CD8-positive, alpha-beta T cell (primary cell): ENCODE measurements at regions of chr11 and their contacts with region 1.

Region 1: GRCh38 chr11:64284048-64284961 is at the start of gene BAD:
- DNase-seq: peak; percentile 85 to 95 (median 92)
- ATAC-seq: peak; percentile 77
- H3K4me3 ChIP-seq: peak within 1 kb of the TSS; percentile 73 to 77
- H3K4me3 Mint-ChIP-seq: peak within 1 kb of the TSS; percentile 88
- H3K27ac ChIP-seq: peak within 1 kb of the TSS; percentile 95 to 100
- H3K27ac Mint-ChIP-seq: peak within 1 kb of the TSS; percentile 97
- H3K4me1 ChIP-seq: peaks cover 18% of the 10 kb centered on the region
- H3K4me1 Mint-ChIP-seq: peaks cover 16% of the 10 kb centered on the region
- H3K27me3 ChIP-seq: no peaks in the 10 kb centered on the region
- H3K27me3 Mint-ChIP-seq: no peaks in the 10 kb centered on the region
- CTCF ChIP-seq: no peak
- total RNA-seq, gene BAD: 14.6 to 18.2 TPM

Region 2: DNA sequence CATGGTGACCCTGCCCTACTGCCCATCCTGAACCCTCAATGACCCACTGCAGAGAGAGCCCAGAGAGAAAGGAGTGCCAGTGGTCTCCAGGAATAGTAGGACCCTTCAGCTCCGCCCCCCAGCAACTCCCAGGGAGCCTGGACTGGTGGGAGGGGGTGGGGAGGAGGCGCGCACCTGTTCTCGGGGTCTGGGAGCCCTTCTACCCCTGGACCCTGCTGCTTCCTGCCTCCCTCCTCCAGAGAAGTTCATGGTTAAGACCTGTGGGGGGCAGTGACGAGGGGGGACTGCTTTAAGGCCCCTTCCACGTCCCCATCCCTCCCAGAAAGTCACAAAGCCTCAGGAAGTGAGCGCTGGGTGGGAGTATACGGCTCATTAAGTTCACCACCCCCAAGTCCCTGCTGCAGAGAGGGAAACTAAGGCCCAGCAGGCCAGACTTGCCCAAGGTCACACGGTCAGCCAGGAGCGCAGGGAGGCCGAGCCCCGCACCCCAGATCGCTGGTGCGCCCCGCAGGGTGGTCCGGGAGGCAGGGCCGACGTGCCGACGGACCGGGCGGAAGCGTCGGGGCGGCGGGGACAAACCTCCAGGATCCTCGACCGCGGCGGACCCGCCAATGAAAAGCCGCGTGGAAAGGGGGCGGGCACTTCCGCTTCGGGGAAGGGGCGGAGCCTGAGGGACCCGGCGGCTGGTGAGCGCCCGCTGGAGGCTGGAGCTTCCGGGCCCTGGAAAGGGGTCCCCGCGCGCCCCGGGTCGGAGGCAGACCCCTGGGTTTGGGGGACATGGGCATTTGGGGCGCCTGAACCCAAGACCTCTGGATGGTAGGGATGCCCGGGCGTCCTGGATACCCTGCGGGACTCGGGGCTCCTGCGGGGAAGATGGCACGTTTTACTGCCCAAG is 58.4 kb before region 1 on chr11 and contains the starts of genes NUDT22 and TRPT1:
- CTCF ChIA-PET with region 1: no interaction called
- POLR2A ChIA-PET with region 1: interaction called, 5 read pairs
- intact Hi-C with region 1: loop called in 1 of 2 experiments (anchors 1 kb)
- DNase-seq: peak; percentile 75 to 96 (median 93)
- ATAC-seq: peak; percentile 65
- H3K4me3 ChIP-seq: peak within 1 kb of the TSS; percentile 76 to 100
- H3K4me3 Mint-ChIP-seq: peak within 1 kb of the TSS; percentile 93
- H3K27ac ChIP-seq: peak within 1 kb of the TSS; percentile 85 to 88
- H3K27ac Mint-ChIP-seq: peak within 1 kb of the TSS; percentile 91
- H3K4me1 ChIP-seq: peaks cover 41% of the 10 kb centered on the region
- H3K4me1 Mint-ChIP-seq: peaks cover 30% of the 10 kb centered on the region
- H3K27me3 ChIP-seq: no peaks in the 10 kb centered on the region
- H3K27me3 Mint-ChIP-seq: no peaks in the 10 kb centered on the region
- CTCF ChIP-seq: peak; percentile 58
- total RNA-seq, gene NUDT22: 20.1 to 23.6 TPM
- total RNA-seq, gene TRPT1: 12.3 to 14.3 TPM

Region 3: GRCh38 chr11:64240394-64241174 is 43.7 kb before region 1 on chr11 and contains the start of gene FKBP2:
- CTCF ChIA-PET with region 1: no interaction called
- POLR2A ChIA-PET with region 1: interaction called, 7 read pairs
- intact Hi-C with region 1: loop called (anchors 1 kb)
- DNase-seq: peak; percentile 94 to 100 (median 97)
- ATAC-seq: peak; percentile 63
- H3K4me3 ChIP-seq: peak within 1 kb of the TSS; percentile 80 to 97
- H3K4me3 Mint-ChIP-seq: peak within 1 kb of the TSS; percentile 90
- H3K27ac ChIP-seq: peak within 1 kb of the TSS; percentile 94 to 99
- H3K27ac Mint-ChIP-seq: peak within 1 kb of the TSS; percentile 100
- H3K4me1 ChIP-seq: peaks cover 29% of the 10 kb centered on the region
- H3K4me1 Mint-ChIP-seq: peaks cover 34% of the 10 kb centered on the region
- H3K27me3 ChIP-seq: no peaks in the 10 kb centered on the region
- H3K27me3 Mint-ChIP-seq: no peaks in the 10 kb centered on the region
- CTCF ChIP-seq: no peak
- total RNA-seq, gene FKBP2: 19.4 TPM

Region 4: DNA sequence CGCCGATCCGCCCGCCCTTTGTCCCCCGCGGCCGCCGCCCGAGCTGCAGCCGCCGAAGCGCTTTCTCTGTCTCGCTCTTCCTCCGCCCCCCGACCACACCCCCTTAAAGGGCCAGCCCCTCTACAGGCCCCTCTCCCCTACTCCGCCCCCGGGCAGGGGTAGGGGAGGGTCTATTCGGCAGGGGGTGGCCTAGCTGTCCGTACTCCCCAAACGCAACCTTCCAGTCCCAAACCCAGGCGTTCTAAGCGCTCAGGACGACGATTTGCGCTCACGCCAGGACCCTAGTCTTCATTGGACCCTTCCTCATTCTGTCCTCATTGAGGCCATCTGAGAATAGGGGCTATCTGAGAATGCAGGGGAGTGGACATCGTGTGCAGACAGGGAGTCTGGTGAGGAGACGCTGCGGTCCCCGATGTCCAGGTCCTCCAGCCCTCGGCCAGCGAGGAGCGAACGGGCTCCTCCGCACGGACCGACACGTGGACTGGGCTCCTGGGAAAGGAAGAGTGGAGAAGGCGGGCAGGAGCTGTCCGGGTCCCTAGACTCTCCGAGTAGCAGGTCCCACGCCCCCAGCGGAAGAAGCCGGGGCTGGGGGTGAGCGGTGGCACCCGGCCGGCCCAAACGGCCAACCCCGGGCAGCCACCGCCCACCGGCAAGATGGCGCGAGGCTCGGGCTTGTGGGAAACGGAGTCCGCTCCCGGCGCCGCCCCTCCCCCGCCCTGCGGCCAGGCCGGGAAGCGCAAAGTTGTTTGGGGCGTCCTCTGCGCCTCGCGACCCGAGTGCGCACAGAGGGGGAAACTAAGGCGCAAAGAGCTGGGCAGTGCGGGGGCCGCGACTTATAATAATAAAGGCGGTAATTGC is 37.2 kb before region 1 on chr11 and contains the start of gene PPP1R14B:
- CTCF ChIA-PET with region 1: interaction called, 14 read pairs
- POLR2A ChIA-PET with region 1: interaction called, 7 read pairs
- intact Hi-C with region 1: no loop called
- DNase-seq: peak; percentile 48 to 83 (median 81)
- ATAC-seq: peak; percentile 58
- H3K4me3 ChIP-seq: peak within 1 kb of the TSS; percentile 75 to 98
- H3K4me3 Mint-ChIP-seq: peak within 1 kb of the TSS; percentile 85
- H3K27ac ChIP-seq: peak within 1 kb of the TSS; percentile 35 to 42
- H3K27ac Mint-ChIP-seq: peak within 1 kb of the TSS; percentile 82
- H3K4me1 ChIP-seq: peaks cover 41% of the 10 kb centered on the region
- H3K4me1 Mint-ChIP-seq: peaks cover 44% of the 10 kb centered on the region
- H3K27me3 ChIP-seq: no peaks in the 10 kb centered on the region
- H3K27me3 Mint-ChIP-seq: no peaks in the 10 kb centered on the region
- CTCF ChIP-seq: no peak
- total RNA-seq, gene PPP1R14B: 25.7 to 30.8 TPM